HepG2 (cell line): ENCODE measurements at regions of chr14 and their contacts with region 1.

Region 1: GRCh38 chr14:23068476-23069412 is 11.4 kb upstream of the CDH24 start:
- DNase-seq: peak; percentile 98
- ATAC-seq: peak; percentile 79
- H3K4me3 ChIP-seq: no peak overlapping the region
- H3K27ac ChIP-seq: peak overlapping the region; percentile 5
- H3K4me1 ChIP-seq: peaks cover 42% of the 10 kb centered on the region
- H3K27me3 ChIP-seq: no peaks in the 10 kb centered on the region; a peak in 1 of 5 replicates
- CTCF ChIP-seq: peak; percentile 99
- EP300 ChIP-seq: no peak; a peak in 1 of 4 replicates
- POLR2A ChIP-seq: peak in 1 of 2 experiments; percentile 24; a peak in 2 of 4 replicates
- RAD21 ChIP-seq: peak; percentile 94

Region 2: GRCh38 chr14:22994762-22995275 is 73.9 kb before region 1 on chr14:
- CTCF ChIA-PET with region 1: interaction called, 5 read pairs
- POLR2A ChIA-PET with region 1: interaction called, 17 read pairs
- in situ Hi-C with region 1: no loop called
- intact Hi-C with region 1: no loop called
- DNase-seq: peak; percentile 67
- ATAC-seq: peak; percentile 94
- H3K4me3 ChIP-seq: no peak overlapping the region
- H3K27ac ChIP-seq: no peak overlapping the region
- H3K4me1 ChIP-seq: peaks cover 5% of the 10 kb centered on the region; the same call in 1 of the 2 replicates
- H3K27me3 ChIP-seq: no peaks in the 10 kb centered on the region
- CTCF ChIP-seq: peak; percentile 90
- EP300 ChIP-seq: no peak
- POLR2A ChIP-seq: no peak
- RAD21 ChIP-seq: peak; percentile 87

Region 3: DNA sequence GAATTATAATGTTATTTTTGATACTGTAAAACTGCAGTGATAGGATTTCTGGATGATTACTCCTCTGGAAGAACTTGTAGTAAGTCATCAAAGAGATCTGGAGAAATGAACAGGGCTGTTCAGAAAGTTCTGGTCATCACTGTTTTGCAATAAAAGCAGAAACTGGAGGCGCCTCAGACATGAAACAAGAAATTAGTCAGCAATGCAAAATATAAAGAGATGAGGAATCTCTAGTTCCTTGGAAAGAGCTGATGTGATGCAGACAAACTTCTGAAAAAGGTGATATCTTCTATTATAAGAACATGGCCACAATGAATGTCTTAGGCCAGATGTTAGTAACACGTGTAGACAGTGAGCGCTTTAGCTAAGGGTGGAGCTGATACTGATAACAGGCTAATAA is 16.7 kb after region 1 on chr14:
- CTCF ChIA-PET with region 1: interaction called, 3 read pairs
- POLR2A ChIA-PET with region 1: interaction called, 20 read pairs
- in situ Hi-C with region 1: no loop called
- intact Hi-C with region 1: no loop called
- DNase-seq: no peak
- ATAC-seq: no peak
- H3K4me3 ChIP-seq: no peak overlapping the region
- H3K27ac ChIP-seq: no peak overlapping the region
- H3K4me1 ChIP-seq: no peaks in the 10 kb centered on the region
- H3K27me3 ChIP-seq: no peaks in the 10 kb centered on the region
- CTCF ChIP-seq: no peak
- EP300 ChIP-seq: no peak
- POLR2A ChIP-seq: no peak
- RAD21 ChIP-seq: no peak

Region 4: GRCh38 chr14:23109769-23110168 is 41.0 kb after region 1 on chr14:
- CTCF ChIA-PET with region 1: interaction called, 30 read pairs
- POLR2A ChIA-PET with region 1: interaction called, 8 read pairs
- in situ Hi-C with region 1: loop called (anchors 5 kb)
- intact Hi-C with region 1: loop called (anchors 1 kb)
- DNase-seq: no peak
- ATAC-seq: no peak
- H3K4me3 ChIP-seq: no peak overlapping the region
- H3K27ac ChIP-seq: no peak overlapping the region
- H3K4me1 ChIP-seq: peaks cover 41% of the 10 kb centered on the region
- H3K27me3 ChIP-seq: peaks cover 22 to 58% of the 10 kb centered on the region in 2 experiments
- CTCF ChIP-seq: no peak
- EP300 ChIP-seq: no peak
- POLR2A ChIP-seq: no peak
- RAD21 ChIP-seq: no peak

Region 5: GRCh38 chr14:23120541-23121251 is 52.0 kb after region 1 on chr14:
- CTCF ChIA-PET with region 1: interaction called, 23 read pairs
- POLR2A ChIA-PET with region 1: interaction called, 6 read pairs
- in situ Hi-C with region 1: no loop called
- intact Hi-C with region 1: no loop called
- DNase-seq: peak; percentile 93
- ATAC-seq: peak; percentile 83
- H3K4me3 ChIP-seq: no peak overlapping the region
- H3K27ac ChIP-seq: no peak overlapping the region
- H3K4me1 ChIP-seq: peaks cover 22% of the 10 kb centered on the region
- H3K27me3 ChIP-seq: peaks cover 47 to 93% of the 10 kb centered on the region in 2 experiments
- CTCF ChIP-seq: peak; percentile 100
- EP300 ChIP-seq: no peak
- POLR2A ChIP-seq: no peak
- RAD21 ChIP-seq: peak; percentile 100

Region 6: GRCh38 chr14:23141671-23142451 is 73.1 kb after region 1 on chr14:
- CTCF ChIA-PET with region 1: no interaction called
- POLR2A ChIA-PET with region 1: no interaction called
- in situ Hi-C with region 1: no loop called
- intact Hi-C with region 1: no loop called
- DNase-seq: no peak
- ATAC-seq: no peak
- H3K4me3 ChIP-seq: no peak overlapping the region
- H3K27ac ChIP-seq: no peak overlapping the region
- H3K4me1 ChIP-seq: peaks cover 10% of the 10 kb centered on the region
- H3K27me3 ChIP-seq: peaks cover 7 to 62% of the 10 kb centered on the region in 2 experiments
- CTCF ChIP-seq: no peak
- EP300 ChIP-seq: no peak
- POLR2A ChIP-seq: no peak
- RAD21 ChIP-seq: no peak

Region 7: DNA sequence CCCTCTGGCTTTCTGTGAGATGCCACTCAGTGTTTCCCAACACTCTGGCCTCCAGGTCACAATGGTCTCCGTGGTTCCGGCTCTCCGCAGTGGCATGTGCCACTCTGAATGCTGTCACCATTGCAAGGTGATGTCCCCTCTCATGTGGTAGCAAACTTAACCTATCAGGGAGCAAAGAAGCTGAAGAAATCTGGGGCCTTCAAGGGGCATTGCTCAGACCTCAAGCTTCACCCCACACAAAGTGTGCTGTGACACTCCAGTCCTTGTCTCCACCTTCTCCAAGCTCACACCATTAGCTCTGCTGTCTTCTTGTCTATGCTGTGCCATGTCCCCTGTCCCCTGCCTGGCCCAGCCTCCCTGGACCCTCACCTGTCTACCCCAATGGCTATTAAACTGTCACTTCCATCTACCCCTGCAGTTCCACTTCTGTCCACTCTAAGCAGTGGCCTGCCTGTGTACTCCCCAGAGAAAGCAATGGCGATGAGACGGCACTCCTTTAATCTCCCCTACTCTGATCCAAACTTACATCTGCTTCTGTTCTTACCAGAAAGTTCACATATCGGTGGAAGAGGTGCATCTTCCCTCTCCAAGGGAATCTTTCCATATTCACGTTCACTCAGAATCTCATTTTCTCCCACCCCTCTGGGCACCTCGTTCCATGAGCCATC is 661.1 kb after region 1 on chr14:
- CTCF ChIA-PET with region 1: no interaction called
- POLR2A ChIA-PET with region 1: no interaction called
- in situ Hi-C with region 1: no loop called
- intact Hi-C with region 1: no loop called
- DNase-seq: peak; percentile 69
- ATAC-seq: peak; percentile 89
- H3K4me3 ChIP-seq: no peak overlapping the region
- H3K27ac ChIP-seq: no peak overlapping the region
- H3K4me1 ChIP-seq: peaks cover 6% of the 10 kb centered on the region
- H3K27me3 ChIP-seq: no peaks in the 10 kb centered on the region
- CTCF ChIP-seq: peak; percentile 44
- EP300 ChIP-seq: no peak
- POLR2A ChIP-seq: no peak
- RAD21 ChIP-seq: 0 out of 2 replicates have a peak, but pooled peaks have one; percentile 22